ENCODE measurements at regions of chr7 and their contacts with region 1.

Region 1: DNA sequence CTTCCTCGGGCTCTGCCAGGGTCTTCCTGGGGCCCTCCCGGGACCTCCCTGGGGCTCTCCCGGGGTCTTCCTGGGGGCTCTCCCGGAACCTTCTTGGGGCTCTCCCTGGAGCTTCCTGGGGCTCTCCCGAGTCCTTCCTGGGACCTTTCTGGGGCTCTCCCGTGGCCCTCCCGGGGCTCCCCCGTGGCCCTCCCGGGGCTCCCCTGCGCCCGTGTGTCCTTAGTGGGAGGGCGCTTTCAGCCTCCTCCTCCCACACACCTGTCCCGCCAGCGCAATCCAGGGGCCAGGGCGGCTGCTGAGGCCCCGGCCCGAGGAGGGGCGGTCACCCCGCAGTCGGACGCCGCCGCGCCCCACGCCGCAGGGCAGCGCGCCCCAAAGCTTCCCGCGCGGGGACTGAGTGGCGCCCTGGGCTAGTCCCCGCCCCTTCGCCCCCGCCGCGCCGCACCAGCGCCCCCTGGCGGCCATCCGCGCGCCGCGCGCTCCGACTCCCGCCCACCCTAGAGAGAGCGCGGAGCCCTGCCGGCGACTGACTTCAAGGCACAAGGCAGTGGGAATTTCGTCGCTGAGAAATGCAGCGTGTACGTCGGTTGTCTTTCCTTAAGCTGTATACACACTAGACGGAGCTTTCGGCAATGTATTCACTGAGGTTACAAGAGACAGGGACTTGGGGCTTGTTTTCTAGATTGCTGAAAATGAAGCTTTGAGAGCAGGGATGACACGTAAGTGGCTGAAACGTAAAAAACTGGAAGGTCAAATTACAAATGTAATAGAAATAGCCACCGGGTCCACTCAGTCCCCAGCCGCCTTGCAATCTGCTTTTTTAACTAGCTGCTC is 47.1 kb downstream of the INSIG1 start:
- DNase-seq: peak; percentile 67 to 73
- H3K4me3 ChIP-seq: peak overlapping the region in 1 of 3 donors; percentile 23
- H3K27ac ChIP-seq: no peak overlapping the region
- H3K4me1 ChIP-seq: peaks cover 0 to 5% of the 10 kb centered on the region in 2 donors
- H3K27me3 ChIP-seq: no peaks in the 10 kb centered on the region
- CTCF ChIP-seq: peak; percentile 43 to 99 (median 92)
- POLR2A ChIP-seq: no peak

Region 2: GRCh38 chr7:154927624-154928143 is 417.1 kb before region 1 on chr7:
- intact Hi-C with region 1: loop called (anchors 2 kb)
- DNase-seq: peak; percentile 85 to 86
- H3K4me3 ChIP-seq: peak overlapping the region in 2 of 3 donors; percentile 23 to 47
- H3K27ac ChIP-seq: peak overlapping the region; percentile 51 to 86 (median 82)
- H3K4me1 ChIP-seq: peaks cover 5 to 7% of the 10 kb centered on the region in 2 donors
- H3K27me3 ChIP-seq: no peaks in the 10 kb centered on the region
- CTCF ChIP-seq: peak; percentile 22 to 78 (median 61)
- POLR2A ChIP-seq: no peak

Region 3: DNA sequence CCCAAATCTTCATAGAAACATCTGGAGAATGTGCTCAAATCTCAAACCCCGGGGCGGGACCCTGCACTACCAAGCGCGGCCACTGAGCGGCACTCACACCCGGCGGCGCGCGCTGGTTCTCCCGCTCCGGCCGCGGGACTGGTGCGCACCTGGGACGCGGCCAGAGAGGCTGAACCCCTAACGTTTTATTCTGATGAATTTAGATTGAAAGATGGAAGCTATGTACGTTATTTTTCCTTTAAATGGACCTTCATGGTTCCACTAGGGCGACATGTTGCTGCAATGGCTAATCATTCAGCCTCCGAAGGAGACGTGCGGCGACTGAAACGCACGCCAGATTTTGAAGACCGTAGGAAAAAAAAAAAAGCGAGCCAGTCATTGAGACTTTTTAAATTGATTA is 154.1 kb before region 1 on chr7:
- intact Hi-C with region 1: loop called (anchors 2 kb)
- DNase-seq: peak; percentile 37 to 42
- H3K4me3 ChIP-seq: no peak overlapping the region
- H3K27ac ChIP-seq: no peak overlapping the region
- H3K4me1 ChIP-seq: no peaks in the 10 kb centered on the region
- H3K27me3 ChIP-seq: no peaks in the 10 kb centered on the region
- CTCF ChIP-seq: peak; percentile 63 to 96 (median 80)
- POLR2A ChIP-seq: no peak

Measured in thyroid gland (tissue), 4 donors.